AG04449 (cell line): ENCODE measurements at regions of chr4 and their contacts with region 1.

Region 1: GRCh38 chr4:56530269-56531148 is 24.9 kb downstream of the ARL9 start:
- DNase-seq: no peak
- H3K4me3 ChIP-seq: peak overlapping the region; percentile 62
- CTCF ChIP-seq: no peak

Region 2: GRCh38 chr4:56544573-56545131 is 14.1 kb after region 1 on chr4:
- CTCF ChIA-PET with region 1: interaction called, 44 read pairs
- POLR2A ChIA-PET with region 1: no interaction called
- DNase-seq: no peak
- H3K4me3 ChIP-seq: peak overlapping the region; percentile 50
- CTCF ChIP-seq: peak; percentile 99